Dendritic cell treated with granulocyte-macrophage colony-stimulating factor and Interleukin-4, amounts not matched to agents 40 ng/mL and 50 ng/mL, for 4 days (primary cell): ENCODE measurements at regions of chr12 and their contacts with region 1.

Region 1: DNA sequence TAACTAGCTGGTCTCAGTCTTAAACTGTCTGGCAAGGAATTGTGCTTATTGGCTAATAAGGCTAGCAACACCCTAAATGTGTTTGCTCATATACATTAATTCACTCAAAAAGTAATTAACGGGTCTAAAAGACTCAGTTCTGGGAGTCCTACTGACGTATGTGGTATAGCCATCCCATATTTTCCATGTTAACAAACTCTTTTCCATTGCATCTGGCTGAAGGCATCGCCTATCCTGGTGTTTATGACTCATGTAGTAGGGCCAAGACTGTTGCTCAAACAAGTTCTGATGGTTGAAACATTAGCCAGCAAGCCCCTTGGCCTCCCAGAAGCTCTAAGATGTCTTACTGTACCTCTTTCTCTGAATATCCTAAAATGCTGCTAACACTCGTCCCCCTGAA is 98.5 kb downstream of the PHLDA1 start:
- H3K4me3 Mint-ChIP-seq: no peak overlapping the region
- H3K27ac Mint-ChIP-seq: no peak overlapping the region
- H3K4me1 Mint-ChIP-seq: peaks cover 4% of the 10 kb centered on the region
- H3K27me3 Mint-ChIP-seq: peaks cover 52% of the 10 kb centered on the region

Region 2: GRCh38 chr12:75977952-75978671 is 45.0 kb after region 1 on chr12:
- intact Hi-C with region 1: loop called (anchors 2 kb)
- H3K4me3 Mint-ChIP-seq: peak overlapping the region; percentile 15
- H3K27ac Mint-ChIP-seq: peak overlapping the region; percentile 75
- H3K4me1 Mint-ChIP-seq: peaks cover 71% of the 10 kb centered on the region
- H3K27me3 Mint-ChIP-seq: no peaks in the 10 kb centered on the region

Region 3: DNA sequence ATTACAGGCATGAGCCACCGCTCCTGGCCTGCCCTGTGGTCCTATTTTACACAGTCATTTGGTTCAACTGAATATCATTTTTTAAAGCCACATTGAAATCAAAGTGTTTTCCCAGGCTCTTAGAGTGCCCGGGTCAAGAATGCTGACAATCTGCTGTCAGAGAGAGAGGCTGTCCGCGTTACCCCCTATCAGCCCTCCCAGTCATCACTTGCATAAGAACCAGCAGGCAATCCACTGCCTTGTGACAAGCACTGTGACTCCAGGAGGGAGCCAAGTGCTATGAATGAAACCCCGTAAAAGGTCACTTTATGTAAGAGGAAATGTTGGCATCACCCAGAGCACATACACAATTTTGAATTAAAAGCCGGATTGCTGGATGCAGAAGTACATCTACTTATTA is 85.0 kb after region 1 on chr12:
- intact Hi-C with region 1: loop called (anchors 5 kb)
- H3K4me3 Mint-ChIP-seq: no peak overlapping the region
- H3K27ac Mint-ChIP-seq: no peak overlapping the region
- H3K4me1 Mint-ChIP-seq: peaks cover 32% of the 10 kb centered on the region
- H3K27me3 Mint-ChIP-seq: peaks cover 8% of the 10 kb centered on the region